Left cardiac atrium (tissue), 4 donors: ENCODE measurements at regions of chr2 and their contacts with region 1.

Region 1: DNA sequence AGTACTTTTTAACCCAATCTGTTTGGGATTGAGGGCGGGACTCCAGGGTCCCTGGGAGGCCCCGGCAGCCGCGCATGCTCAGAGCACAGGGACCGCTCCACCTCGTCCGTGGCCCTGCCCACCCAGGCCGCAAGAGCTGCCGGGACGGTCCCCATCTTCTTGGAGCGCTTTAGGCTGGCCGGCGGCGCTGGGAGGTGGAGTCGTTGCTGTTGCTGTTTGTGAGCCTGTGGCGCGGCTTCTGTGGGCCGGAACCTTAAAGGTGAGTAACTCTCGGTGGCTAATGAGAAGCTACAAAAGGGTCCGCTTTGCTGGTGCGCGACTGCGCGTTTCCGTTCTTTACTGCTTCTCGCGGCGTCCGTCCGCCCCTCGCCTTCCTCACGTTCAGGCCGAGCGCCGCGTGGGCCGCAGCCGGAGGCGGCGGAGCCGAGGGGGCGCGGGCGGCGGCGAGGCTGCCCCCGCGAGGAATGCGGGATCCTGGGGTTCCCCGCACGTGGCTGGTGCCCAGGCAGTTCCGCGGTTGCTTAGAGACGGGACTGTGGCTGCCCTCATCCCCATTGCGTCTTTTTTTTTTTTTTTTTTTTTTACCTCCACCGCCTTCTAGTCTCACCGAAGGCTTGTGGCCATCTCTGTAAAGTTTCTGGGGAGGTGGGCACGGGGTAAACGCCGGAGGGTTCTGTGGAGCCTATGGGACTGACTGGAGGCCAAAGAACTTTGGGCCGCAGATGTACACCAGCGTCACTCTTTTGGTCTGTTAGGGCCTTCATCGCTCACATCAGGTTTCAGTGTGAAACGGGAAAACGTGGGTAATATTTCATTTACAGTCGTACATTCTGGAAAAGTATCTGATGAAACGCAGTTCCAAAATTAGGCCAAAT is at the start of gene SSB:
- DNase-seq: peak; percentile 96
- ATAC-seq: peak; percentile 100
- total RNA-seq, gene SSB: 57.4 to 75.3 TPM

Region 2: DNA sequence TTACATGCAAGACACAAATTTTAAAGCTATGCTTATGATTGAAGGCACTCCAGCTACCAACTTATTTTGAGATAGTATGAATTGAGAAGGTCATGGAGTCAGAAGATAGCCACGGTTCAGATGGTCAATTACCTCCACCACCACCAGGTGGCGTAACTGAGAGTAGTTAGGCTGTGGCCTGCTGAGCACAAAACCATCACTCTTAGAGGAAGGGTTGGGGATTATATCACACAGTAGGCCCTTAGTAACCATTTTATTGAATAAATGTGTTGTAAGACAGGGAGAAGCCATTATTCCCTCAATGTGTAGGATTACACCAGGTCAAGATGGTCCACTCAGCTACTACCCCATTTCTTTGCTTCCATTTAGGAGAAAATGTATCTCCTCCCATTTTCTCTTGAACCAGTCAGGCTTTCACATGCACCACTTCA is 270.7 kb before region 1 on chr2:
- intact Hi-C with region 1: loop called in 1 of 2 experiments (anchors 10 kb)
- DNase-seq: peak; percentile 63
- ATAC-seq: peak; percentile 50 to 77